ENCODE measurements at regions of chr21 and their contacts with region 1.

Region 1: GRCh38 chr21:43921979-43922945 is 57.2 kb downstream of the AGPAT3 start:
- DNase-seq: no peak
- ATAC-seq: peak in 5 of 8 donors; percentile 1 to 53 (median 12)
- H3K4me3 ChIP-seq: no peak overlapping the region
- H3K27ac ChIP-seq: peak overlapping the region in 9 of 10 donors; percentile 8 to 59 (median 50)
- H3K4me1 ChIP-seq: peaks cover 16 to 66% (median 45%) of the 10 kb centered on the region in 9 donors
- H3K27me3 ChIP-seq: no peaks in the 10 kb centered on the region
- CTCF ChIP-seq: no peak

Region 2: DNA sequence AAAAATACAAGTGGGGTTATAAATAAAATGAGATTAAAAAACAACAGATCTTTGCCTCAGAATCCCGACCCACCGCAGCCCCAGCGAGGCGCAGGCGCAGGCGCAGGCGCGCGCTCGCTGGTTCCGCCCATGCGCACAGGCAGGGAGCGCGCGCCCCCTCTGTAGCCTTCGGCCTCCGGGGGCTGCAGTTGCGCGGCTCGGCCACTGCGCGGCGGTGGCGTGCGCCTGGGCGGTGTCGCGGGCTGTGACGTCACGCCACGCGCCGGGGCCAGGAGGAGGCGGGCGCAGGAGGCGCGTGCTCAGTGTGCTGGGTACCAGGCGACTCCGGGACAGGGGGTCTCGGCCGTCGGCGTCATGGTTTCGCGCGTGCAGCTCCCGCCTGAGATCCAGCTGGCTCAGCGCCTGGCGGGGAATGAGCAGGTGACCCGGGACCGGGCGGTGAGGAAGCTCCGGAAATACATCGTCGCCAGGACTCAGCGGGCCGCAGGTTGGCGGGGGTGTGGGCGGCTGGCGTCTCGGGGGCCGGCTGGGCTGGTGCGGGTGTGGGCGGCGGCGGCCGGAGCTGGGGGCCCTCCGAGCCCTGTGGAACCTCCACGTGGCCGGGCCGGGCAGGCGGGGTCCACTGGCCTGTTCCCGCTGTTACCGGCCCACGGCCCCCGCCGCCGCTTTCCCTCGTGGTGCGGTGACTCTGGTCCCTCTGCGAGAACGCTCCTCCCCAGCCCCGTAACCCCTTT is 132.8 kb before region 1 on chr21 and contains the start of gene RRP1:
- intact Hi-C with region 1: no loop called
- DNase-seq: peak; percentile 84 to 94
- ATAC-seq: peak; percentile 95 to 98 (median 95)
- H3K4me3 ChIP-seq: peak within 1 kb of the TSS; percentile 73 to 97 (median 92)
- H3K27ac ChIP-seq: peak within 1 kb of the TSS; percentile 53 to 95 (median 86)
- H3K4me1 ChIP-seq: peaks cover 6 to 22% (median 19%) of the 10 kb centered on the region in 9 donors
- H3K27me3 ChIP-seq: no peaks in the 10 kb centered on the region
- CTCF ChIP-seq: peak in 8 of 9 donors; percentile 97 to 100 (median 100)
- total RNA-seq, gene RRP1: 6.3 to 13.9 (median 9.3) TPM

Region 3: DNA sequence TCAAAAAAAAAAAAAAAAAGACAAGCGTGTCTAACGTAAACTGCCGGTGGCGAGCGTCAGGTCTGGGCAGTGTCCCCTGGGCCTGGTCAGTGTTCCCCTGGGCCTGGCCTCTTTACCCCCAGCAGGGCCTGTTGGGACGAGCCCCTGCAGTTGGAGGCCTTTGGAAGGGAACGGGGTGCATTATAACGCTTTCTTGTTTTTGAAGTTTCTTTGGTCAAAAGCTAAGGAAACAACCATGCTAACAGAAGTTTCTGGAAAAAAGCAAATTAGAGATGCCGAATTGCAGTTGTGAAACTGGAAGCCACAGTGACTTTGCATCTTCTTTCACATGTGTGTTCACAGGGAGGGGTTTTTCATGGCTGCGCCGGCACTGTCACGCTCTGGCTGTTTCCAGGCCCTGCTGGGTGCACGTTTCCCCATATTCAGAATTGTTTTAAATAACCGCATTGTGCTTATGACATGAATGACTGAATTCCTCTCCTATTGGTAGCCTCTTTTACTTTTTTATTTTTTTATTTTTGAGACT is 116.9 kb before region 1 on chr21:
- intact Hi-C with region 1: no loop called
- DNase-seq: no peak
- ATAC-seq: no peak
- H3K4me3 ChIP-seq: no peak overlapping the region
- H3K27ac ChIP-seq: peak overlapping the region in 1 of 10 donors; percentile 66
- H3K4me1 ChIP-seq: peaks cover 0 to 19% (median 0%) of the 10 kb centered on the region in 9 donors
- H3K27me3 ChIP-seq: no peaks in the 10 kb centered on the region
- CTCF ChIP-seq: no peak

Region 4: GRCh38 chr21:43874085-43874785 is 48.0 kb before region 1 on chr21:
- intact Hi-C with region 1: loop called in 3 of 10 experiments (anchors 2 to 10 kb)
- DNase-seq: no peak
- ATAC-seq: no peak
- H3K4me3 ChIP-seq: no peak overlapping the region
- H3K27ac ChIP-seq: no peak overlapping the region
- H3K4me1 ChIP-seq: peaks cover 0 to 44% (median 33%) of the 10 kb centered on the region in 9 donors
- H3K27me3 ChIP-seq: no peaks in the 10 kb centered on the region
- CTCF ChIP-seq: no peak

Region 5: DNA sequence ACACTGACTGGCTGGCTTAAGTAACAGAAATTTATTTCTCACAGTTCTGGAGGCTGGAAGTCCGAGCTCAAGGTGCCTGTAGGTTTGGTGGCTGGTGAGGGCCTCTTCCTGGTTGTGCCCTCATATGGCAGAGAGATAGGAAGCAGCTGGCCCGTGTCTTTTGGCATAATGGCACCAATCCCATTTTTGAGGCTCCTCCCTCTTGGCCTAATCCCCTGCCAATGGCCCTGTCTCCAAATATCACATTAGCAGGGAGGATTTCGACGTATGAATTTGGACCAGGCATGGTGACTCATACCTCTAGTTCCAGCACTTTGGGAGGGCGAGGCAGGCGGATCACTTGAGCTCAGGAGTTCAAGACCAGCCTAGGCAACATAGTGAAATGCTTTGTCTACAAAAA is 19.8 kb before region 1 on chr21:
- intact Hi-C with region 1: loop called in 1 of 10 experiments (anchors 2 kb)
- DNase-seq: peak in 1 of 2 donors; percentile 34
- ATAC-seq: peak; percentile 37 to 67 (median 56)
- H3K4me3 ChIP-seq: no peak overlapping the region
- H3K27ac ChIP-seq: peak overlapping the region in 9 of 10 donors; percentile 65 to 82 (median 72)
- H3K4me1 ChIP-seq: peaks cover 0 to 26% (median 13%) of the 10 kb centered on the region in 9 donors
- H3K27me3 ChIP-seq: no peaks in the 10 kb centered on the region
- CTCF ChIP-seq: no peak